ENCODE measurements at regions of chr5 and their contacts with region 1.

Region 1: DNA sequence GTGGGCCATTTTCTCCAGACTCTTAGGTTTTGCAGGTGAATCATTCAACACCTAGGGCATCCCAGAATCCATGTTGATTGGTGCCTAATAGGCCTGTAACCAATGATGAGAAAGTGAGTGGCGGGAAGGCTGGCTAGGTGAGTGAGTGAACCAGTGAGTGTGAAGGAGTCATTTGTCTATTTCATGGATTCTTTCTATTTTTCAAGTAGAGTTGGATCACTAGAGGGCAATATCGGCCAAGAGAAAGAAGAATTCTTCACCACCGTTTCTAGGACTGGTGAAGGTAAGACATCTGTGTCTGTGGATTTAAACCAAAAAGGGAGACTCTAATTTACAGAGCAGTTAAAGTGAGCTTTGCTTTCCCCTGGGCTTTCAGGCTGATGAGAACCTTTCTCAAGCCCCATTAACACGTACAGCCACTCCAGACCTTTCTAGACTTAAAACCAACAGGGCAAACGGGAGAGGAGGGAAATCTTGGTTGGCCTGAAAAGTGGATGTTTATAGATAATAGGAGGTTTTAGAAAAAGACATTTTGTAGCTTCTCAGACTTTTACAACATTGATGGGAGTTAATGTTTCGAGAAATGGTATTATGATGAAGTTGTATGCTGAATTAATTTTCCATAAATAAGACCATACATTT is 114.3 kb upstream of the IL12B start:
- DNase-seq: no peak
- H3K4me3 ChIP-seq: no peak overlapping the region
- CTCF ChIP-seq: peak; percentile 28

Region 2: GRCh38 chr5:157748760-157749461 is 1695.7 kb before region 1 on chr5:
- CTCF ChIA-PET with region 1: no interaction called
- POLR2A ChIA-PET with region 1: no interaction called
- DNase-seq: peak; percentile 66
- H3K4me3 ChIP-seq: no peak overlapping the region
- CTCF ChIP-seq: no peak

Region 3: DNA sequence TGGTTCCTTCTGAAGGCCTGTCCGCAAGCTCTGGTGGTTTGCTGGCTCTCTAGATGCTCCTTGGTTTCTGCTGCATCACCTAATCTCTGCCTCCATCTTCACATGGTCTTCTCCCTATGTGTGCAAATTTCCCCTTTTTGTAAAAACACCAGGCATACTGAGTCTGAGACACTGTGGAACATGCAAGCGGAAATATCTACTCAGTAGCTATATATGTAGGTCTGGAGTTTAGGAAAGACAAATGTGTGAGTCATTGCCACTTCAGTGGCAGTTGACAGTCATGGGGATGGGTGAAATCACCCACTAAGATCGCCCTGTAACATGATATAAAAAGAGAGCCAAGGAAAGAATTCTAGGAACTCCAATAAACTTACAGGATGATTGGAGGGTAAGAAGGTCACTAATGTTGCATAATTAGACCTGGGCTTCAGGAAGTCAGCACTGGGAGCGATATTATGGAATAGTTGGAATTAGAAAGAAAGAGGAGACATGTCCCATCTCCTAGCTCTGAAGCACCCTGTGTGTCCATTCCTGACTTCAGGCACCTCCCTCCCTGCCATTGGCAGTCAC is 204.2 kb before region 1 on chr5:
- CTCF ChIA-PET with region 1: no interaction called
- POLR2A ChIA-PET with region 1: no interaction called
- DNase-seq: peak; percentile 16
- H3K4me3 ChIP-seq: no peak overlapping the region
- CTCF ChIP-seq: no peak

Region 4: DNA sequence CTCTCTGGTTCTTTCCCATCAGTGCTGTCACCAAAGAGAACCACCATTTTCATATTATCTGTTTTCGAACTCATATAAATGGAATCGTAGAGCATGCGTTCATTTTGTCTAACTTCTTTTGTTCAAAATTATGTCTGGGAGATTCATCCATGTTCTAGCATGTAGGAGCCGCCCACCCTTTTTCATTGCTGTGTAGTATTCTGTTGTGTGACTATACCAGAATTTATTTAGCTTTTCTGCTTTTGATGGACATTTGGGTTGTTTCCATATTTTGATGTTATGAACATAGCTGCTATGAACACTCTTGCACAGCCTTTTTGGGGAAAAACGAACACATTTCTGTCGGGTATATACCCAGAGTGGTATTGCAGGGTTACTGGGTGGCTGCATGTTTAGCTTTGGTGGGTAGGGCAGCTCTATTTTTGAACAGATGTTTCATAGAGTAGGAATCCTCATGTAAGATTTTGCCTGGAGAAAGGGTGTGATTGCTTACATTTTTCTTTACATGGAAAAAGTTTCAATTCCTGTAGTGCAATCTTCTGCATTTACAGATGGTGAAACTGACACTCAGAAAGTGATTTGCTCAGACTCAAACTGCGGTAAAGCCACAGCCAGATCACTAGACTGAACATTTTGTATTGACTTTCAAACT is 14.1 kb before region 1 on chr5:
- CTCF ChIA-PET with region 1: interaction called, 15 read pairs
- POLR2A ChIA-PET with region 1: no interaction called
- DNase-seq: no peak
- H3K4me3 ChIP-seq: no peak overlapping the region
- CTCF ChIP-seq: no peak

Region 5: GRCh38 chr5:159638954-159639559 is 194.5 kb after region 1 on chr5:
- CTCF ChIA-PET with region 1: no interaction called
- POLR2A ChIA-PET with region 1: no interaction called
- DNase-seq: no peak
- H3K4me3 ChIP-seq: no peak overlapping the region
- CTCF ChIP-seq: no peak

Region 6: GRCh38 chr5:159764283-159765134 is 319.9 kb after region 1 on chr5:
- CTCF ChIA-PET with region 1: interaction called, 10 read pairs
- POLR2A ChIA-PET with region 1: interaction called, 3 read pairs
- DNase-seq: peak; percentile 88
- H3K4me3 ChIP-seq: no peak overlapping the region
- CTCF ChIP-seq: no peak

Region 7: DNA sequence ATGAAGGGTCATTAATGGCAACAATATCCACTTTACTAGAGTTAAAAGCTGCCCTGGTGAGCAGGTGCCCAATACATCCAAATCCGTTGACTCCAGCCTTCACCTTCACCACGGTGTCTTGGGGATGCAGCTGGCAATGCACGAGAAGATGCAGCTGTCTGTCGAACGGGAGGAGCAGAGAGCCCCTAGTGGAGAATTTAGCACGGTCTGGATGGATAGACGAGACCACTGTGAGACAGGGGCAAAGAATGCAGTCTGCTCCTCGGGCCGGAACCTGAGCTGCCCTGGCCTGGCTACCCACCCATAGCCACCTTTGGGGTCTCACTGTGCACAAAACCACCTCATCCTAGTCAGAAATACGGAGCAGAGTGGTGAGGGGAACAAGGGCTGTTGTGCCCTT is 506.8 kb after region 1 on chr5:
- CTCF ChIA-PET with region 1: interaction called, 13 read pairs
- POLR2A ChIA-PET with region 1: no interaction called
- DNase-seq: no peak
- H3K4me3 ChIP-seq: no peak overlapping the region
- CTCF ChIP-seq: peak; percentile 30

Region 8: DNA sequence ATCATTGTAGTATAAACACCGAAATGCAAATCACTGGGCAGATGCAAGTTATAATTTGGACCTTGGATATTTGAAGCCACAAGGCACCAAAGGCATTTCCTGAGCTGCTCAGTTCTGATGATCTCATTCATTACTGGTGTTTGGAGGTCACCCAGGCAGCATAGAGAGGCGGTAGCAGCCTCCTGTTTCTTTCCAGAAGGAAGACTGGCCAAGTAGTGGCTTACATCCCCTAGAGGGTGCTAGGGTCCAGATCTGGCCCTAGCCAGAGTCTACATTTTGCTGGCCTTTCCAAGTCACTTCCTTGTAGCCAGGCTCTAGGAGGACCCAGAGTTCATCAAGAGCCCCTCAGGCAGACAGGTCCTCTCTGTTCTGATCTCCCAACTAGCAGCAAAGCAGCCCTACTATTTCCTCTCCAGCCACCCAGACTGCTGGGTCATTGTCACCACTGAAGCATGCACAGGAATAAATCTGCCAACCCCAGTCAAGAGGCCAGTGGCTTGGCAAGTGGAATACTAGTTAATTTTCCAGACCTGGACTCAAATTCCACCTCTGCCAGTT is 531.0 kb after region 1 on chr5:
- CTCF ChIA-PET with region 1: interaction called, 231 read pairs
- POLR2A ChIA-PET with region 1: no interaction called
- DNase-seq: peak; percentile 88
- H3K4me3 ChIP-seq: no peak overlapping the region
- CTCF ChIP-seq: peak; percentile 76

Measured in AG04449 (cell line).